ENCODE measurements at regions of chr10 and their contacts with region 1.

Region 1: DNA sequence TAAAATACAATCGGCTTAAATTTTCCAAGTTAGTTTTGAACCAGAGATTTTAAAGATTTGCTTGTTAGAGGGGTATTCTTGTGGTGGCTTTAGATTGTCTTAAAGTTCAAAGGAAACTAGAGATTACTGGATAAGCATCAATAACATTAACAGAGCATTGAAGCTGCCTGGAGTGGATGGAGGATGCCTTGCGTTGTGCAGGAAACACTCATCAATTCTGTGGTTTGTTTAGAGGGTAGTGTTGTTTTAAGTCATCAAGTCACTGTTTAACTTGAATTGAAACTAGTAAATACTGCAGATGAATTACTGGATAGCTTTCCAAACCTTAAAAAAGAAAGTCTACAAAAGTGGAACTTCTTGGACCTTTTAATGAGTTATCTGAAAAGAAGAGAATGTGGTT is 218.6 kb downstream of the CELF2 start:
- DNase-seq: peak; percentile 61
- H3K4me3 Mint-ChIP-seq: peak overlapping the region; percentile 26
- H3K27ac Mint-ChIP-seq: peak overlapping the region; percentile 93
- H3K4me1 Mint-ChIP-seq: peaks cover 92% of the 10 kb centered on the region
- H3K27me3 Mint-ChIP-seq: no peaks in the 10 kb centered on the region

Region 2: DNA sequence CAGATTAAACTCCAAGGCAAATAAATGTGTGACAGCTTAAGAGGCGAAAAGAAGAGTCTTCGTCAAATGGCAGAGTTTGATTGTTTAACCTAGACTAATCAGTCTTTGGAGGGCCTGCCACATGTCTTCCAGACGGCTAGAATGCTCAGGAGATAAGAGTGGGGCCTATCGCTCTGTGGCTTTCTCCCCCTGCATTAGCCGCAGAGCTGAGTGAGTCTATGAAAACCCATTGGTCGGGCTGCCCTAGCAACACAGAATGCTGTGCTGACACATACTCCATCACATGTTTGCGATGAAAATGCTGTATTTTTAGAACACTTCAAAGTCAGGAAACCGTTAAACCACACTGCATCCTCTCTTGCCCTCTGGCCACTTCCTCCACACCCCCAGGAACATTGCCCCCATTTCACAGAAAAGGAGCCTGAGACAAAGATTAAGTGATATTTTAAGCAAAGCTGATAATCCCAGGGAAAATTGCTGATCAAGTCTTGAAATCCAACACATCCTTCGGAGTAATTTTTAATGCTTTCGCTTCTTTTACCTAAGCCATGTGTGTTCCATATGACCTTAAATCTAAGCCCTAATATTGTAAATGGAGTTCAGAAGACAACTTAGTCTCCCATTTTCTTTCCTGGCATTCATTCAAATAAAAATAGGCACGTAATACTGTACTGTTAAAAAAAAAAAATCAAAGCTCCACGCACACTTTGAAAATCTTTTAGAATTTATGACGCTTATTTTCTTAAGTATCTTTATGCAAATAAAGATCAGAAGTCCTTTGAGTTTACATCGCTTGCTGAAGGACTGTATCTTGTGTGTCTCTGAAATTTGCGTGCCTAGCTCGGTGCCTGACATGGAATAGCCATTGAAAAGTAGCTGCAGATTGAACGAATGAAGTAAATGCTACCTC is 57.4 kb before region 1 on chr10:
- CTCF ChIA-PET with region 1: interaction called, 5 read pairs
- intact Hi-C with region 1: loop called (anchors 1 kb)
- DNase-seq: peak; percentile 90
- H3K4me3 Mint-ChIP-seq: peak overlapping the region; percentile 82
- H3K27ac Mint-ChIP-seq: no peak overlapping the region
- H3K4me1 Mint-ChIP-seq: peaks cover 88% of the 10 kb centered on the region
- H3K27me3 Mint-ChIP-seq: no peaks in the 10 kb centered on the region

Region 3: GRCh38 chr10:11225935-11226334 is 10.3 kb before region 1 on chr10:
- CTCF ChIA-PET with region 1: interaction called, 6 read pairs
- intact Hi-C with region 1: loop called (anchors 1 kb)
- DNase-seq: peak; percentile 88
- H3K4me3 Mint-ChIP-seq: peak overlapping the region; percentile 56
- H3K27ac Mint-ChIP-seq: peak overlapping the region; percentile 87
- H3K4me1 Mint-ChIP-seq: peaks cover 89% of the 10 kb centered on the region
- H3K27me3 Mint-ChIP-seq: no peaks in the 10 kb centered on the region

Region 4: DNA sequence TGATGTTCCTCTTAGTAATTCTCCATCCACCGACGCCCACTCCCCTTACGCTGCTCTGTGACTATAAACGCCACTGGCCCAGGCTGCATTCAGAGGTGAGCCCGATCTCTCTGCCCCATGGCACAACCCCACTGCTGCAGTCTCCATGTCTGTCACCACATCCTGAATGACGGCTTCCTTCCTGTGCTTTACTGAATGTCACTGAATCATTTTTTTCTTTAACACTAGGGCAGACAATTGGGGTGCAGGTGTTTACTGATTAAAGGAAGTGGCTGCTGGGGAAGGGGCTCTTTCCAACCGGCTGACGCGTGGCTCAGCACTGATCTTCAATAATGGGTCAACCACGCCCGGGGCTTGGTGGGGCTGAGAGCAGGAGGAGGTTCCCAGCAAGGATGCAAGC is 166.9 kb after region 1 on chr10:
- CTCF ChIA-PET with region 1: no interaction called
- intact Hi-C with region 1: loop called (anchors 5 kb)
- DNase-seq: peak; percentile 83
- H3K4me3 Mint-ChIP-seq: peak overlapping the region; percentile 63
- H3K27ac Mint-ChIP-seq: peak overlapping the region; percentile 88
- H3K4me1 Mint-ChIP-seq: peaks cover 50% of the 10 kb centered on the region
- H3K27me3 Mint-ChIP-seq: no peaks in the 10 kb centered on the region

Region 5: DNA sequence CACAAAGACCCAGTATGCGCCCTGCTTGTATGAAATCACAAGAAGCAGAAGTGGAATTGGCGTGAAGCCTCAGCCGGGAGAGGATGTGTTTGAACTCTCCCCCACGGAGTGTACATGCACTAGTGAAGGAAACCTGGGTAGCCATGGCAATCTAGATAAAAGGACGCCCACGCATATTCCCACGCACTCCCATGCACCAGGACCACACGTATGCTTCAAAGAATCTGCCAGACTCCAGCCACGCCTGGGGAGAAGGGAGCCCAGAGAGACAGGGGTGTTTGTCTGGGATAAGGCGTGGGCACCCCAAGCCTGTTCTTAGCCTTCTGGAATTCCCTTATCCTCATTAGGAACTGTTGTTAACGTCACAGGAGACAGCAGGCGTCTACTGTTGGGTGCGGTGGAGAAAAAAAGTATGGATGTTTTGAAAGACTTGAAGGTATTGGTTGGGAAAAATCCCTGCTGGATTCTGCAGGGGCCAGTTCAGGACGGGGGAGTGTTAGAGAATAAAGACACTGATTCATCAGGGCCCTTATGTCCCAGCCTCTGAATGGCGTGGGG is 477.0 kb after region 1 on chr10:
- CTCF ChIA-PET with region 1: no interaction called
- intact Hi-C with region 1: loop called (anchors 1 kb)
- DNase-seq: no peak
- H3K4me3 Mint-ChIP-seq: no peak overlapping the region
- H3K27ac Mint-ChIP-seq: no peak overlapping the region
- H3K4me1 Mint-ChIP-seq: peaks cover 17% of the 10 kb centered on the region
- H3K27me3 Mint-ChIP-seq: peaks cover 32% of the 10 kb centered on the region

Measured in activated naive CD4-positive, alpha-beta T cell treated with anti-CD3 and anti-CD28 coated beads for 36 hours (primary cell).